H1 (cell line): ENCODE measurements at regions of chr19 and their contacts with region 1.

Region 1: DNA sequence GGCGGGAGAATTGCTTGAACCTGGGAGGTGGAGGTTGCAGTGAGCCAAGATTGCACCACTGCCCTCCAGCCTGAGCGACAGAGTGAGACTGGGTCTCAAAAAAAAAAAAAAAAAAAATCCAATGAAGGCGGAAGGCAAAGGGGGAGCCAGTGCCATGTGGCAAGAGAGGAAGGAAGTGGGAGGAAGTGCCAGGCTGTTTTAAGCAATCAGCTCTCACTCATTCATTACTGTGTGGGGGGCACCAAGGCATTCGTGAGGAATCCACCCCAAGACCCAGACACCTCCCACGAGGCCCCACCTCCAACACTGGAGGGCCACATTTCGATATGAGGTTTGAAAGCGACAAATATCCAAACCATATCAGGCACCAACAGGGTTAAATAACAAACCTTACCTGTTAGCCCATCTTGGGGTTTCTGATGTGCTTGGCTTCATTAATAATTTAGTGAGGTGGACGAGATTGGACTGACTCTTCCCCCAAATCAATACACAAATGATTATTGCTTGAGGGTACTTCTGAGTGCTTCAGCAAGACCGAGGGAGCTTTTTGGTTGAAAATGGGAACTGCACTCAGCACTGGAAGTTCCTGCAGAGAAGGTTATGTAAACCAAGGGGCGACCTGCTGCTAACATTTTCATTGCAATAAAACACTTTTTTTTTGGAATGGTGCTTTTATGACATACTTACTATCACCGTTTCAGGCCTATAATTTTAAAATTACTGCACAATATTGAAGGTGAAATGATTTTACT is 7.5 kb upstream of the LRP3 start:
- DNase-seq: no peak
- H3K4me3 ChIP-seq: no peak overlapping the region
- H3K27ac ChIP-seq: no peak overlapping the region
- H3K4me1 ChIP-seq: peaks cover 0 to 7% (median 1%) of the 10 kb centered on the region in 4 experiments; a peak in 3 of 7 replicates
- H3K27me3 ChIP-seq: peaks cover 0 to 4% (median 0%) of the 10 kb centered on the region in 4 experiments; a peak in 2 of 7 replicates
- CTCF ChIP-seq: no peak
- EP300 ChIP-seq: no peak
- POLR2A ChIP-seq: no peak
- RAD21 ChIP-seq: no peak

Region 2: GRCh38 chr19:33125929-33126388 is 60.6 kb before region 1 on chr19:
- CTCF ChIA-PET with region 1: interaction called, 58 read pairs
- POLR2A ChIA-PET with region 1: no interaction called
- DNase-seq: peak in 1 of 2 experiments; percentile 58
- H3K4me3 ChIP-seq: no peak overlapping the region
- H3K27ac ChIP-seq: no peak overlapping the region
- H3K4me1 ChIP-seq: no peaks in the 10 kb centered on the region
- H3K27me3 ChIP-seq: no peaks in the 10 kb centered on the region
- CTCF ChIP-seq: peak; percentile 71 to 82 (median 80)
- EP300 ChIP-seq: peak in 1 of 2 experiments; percentile 6; a peak in 1 of 3 replicates
- POLR2A ChIP-seq: no peak
- RAD21 ChIP-seq: peak; percentile 75 to 79

Region 3: GRCh38 chr19:33143897-33144405 is 42.7 kb before region 1 on chr19:
- CTCF ChIA-PET with region 1: interaction called, 25 read pairs
- POLR2A ChIA-PET with region 1: interaction called, 8 read pairs
- DNase-seq: peak in 1 of 2 experiments; percentile 78
- H3K4me3 ChIP-seq: no peak overlapping the region
- H3K27ac ChIP-seq: no peak overlapping the region
- H3K4me1 ChIP-seq: peaks cover 0 to 2% (median 0%) of the 10 kb centered on the region in 4 experiments; a peak in 1 of 7 replicates
- H3K27me3 ChIP-seq: no peaks in the 10 kb centered on the region
- CTCF ChIP-seq: peak; percentile 93 to 96 (median 95)
- EP300 ChIP-seq: peak in 1 of 2 experiments; percentile 67; a peak in 1 of 3 replicates
- POLR2A ChIP-seq: no peak
- RAD21 ChIP-seq: peak; percentile 86

Region 4: DNA sequence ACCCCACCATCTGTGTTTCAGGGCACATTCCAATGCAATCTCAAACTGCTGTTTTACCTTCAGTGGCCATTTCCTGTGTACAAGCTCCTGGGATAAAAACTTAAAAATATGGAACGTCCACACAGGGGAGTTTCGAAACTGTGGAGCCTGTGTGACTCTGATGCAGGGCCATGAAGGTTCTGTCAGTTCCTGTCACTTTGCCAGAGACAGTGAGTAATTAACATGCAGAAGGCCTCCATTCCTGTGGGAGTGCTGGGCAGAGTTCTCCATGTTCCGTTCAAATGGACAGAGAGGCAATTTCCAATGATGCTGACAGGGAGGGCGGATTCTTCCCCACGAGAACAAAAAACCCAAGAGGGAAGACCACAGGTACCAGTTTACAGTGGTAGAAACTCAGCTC is 30.3 kb before region 1 on chr19:
- CTCF ChIA-PET with region 1: interaction called, 12 read pairs
- POLR2A ChIA-PET with region 1: no interaction called
- DNase-seq: no peak
- H3K4me3 ChIP-seq: no peak overlapping the region
- H3K27ac ChIP-seq: no peak overlapping the region
- H3K4me1 ChIP-seq: no peaks in the 10 kb centered on the region
- H3K27me3 ChIP-seq: no peaks in the 10 kb centered on the region
- CTCF ChIP-seq: no peak
- EP300 ChIP-seq: no peak
- POLR2A ChIP-seq: no peak
- RAD21 ChIP-seq: no peak

Region 5: GRCh38 chr19:33208904-33209849 is 22.6 kb after region 1 on chr19:
- CTCF ChIA-PET with region 1: interaction called, 11 read pairs
- POLR2A ChIA-PET with region 1: no interaction called
- DNase-seq: no peak
- H3K4me3 ChIP-seq: no peak overlapping the region
- H3K27ac ChIP-seq: no peak overlapping the region
- H3K4me1 ChIP-seq: no peaks in the 10 kb centered on the region; a peak in 2 of 7 replicates
- H3K27me3 ChIP-seq: no peaks in the 10 kb centered on the region
- CTCF ChIP-seq: no peak
- EP300 ChIP-seq: no peak
- POLR2A ChIP-seq: no peak
- RAD21 ChIP-seq: no peak